Activated CD4-positive, alpha-beta T cell treated with anti-CD3 and anti-CD28 coated beads for 36 hours (primary cell): ENCODE measurements at regions of chr2 and their contacts with region 1.

Region 1: DNA sequence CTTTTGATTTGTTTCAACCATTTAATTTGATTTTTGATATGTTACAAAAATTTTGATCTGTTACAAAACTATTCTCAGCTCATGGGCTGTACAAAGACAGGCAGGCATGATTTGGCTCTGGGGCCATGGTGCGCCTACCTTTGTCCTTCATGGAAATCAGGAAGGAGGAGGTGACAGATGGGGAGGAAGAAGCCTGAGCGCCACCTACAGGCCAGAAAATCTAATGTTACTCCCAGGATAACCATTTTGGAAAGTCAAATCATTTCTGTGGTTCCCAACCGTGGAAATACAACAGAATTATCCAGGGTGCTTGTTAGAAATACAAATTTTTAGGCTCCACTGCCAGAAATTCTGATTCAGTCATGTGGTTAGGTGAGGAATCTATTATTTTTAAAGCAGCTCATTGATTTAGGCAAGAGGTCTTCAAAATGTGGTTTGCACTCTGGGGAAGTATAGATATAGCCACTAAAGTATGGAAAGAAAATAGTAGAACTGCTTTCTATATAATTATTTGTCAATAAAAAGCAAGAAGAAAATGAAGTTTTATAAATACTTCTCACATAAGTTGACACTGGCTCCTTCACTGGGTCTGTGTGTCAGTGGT is 93.9 kb downstream of the EVA1A start:
- DNase-seq: peak; percentile 40
- ATAC-seq: no peak
- H3K4me3 Mint-ChIP-seq: no peak overlapping the region
- H3K27ac Mint-ChIP-seq: no peak overlapping the region
- H3K4me1 Mint-ChIP-seq: no peaks in the 10 kb centered on the region
- H3K27me3 Mint-ChIP-seq: peaks cover 14% of the 10 kb centered on the region

Region 2: DNA sequence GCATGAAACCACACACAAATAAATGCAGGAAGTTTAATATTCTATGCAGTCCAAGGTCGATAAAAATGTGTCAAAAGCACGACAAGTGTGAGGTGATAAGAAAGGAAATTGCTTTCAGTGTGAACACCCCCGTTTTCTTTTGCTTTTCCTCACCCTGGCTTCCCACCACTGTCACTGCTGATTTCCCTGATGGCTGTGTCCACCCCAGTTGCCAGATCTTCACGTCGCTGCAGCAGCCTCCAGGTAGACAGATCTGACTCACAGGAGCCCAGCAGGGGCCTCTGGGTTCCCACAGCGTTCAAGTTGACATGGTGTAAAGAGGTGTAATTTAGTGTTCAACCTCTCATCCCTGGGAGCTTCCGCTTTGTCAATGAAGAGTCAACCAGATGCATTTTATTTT is 139.5 kb before region 1 on chr2:
- CTCF ChIA-PET with region 1: no interaction called
- POLR2A ChIA-PET with region 1: no interaction called
- intact Hi-C with region 1: no loop called
- DNase-seq: no peak
- ATAC-seq: no peak
- H3K4me3 Mint-ChIP-seq: no peak overlapping the region
- H3K27ac Mint-ChIP-seq: no peak overlapping the region
- H3K4me1 Mint-ChIP-seq: no peaks in the 10 kb centered on the region
- H3K27me3 Mint-ChIP-seq: peaks cover 7% of the 10 kb centered on the region

Region 3: GRCh38 chr2:75403991-75404428 is 62.8 kb before region 1 on chr2:
- CTCF ChIA-PET with region 1: no interaction called
- POLR2A ChIA-PET with region 1: no interaction called
- intact Hi-C with region 1: no loop called
- DNase-seq: no peak
- ATAC-seq: peak; percentile 63
- H3K4me3 Mint-ChIP-seq: no peak overlapping the region
- H3K27ac Mint-ChIP-seq: no peak overlapping the region
- H3K4me1 Mint-ChIP-seq: no peaks in the 10 kb centered on the region
- H3K27me3 Mint-ChIP-seq: peaks cover 8% of the 10 kb centered on the region

Region 4: GRCh38 chr2:75608684-75609333 is 142.0 kb after region 1 on chr2:
- CTCF ChIA-PET with region 1: interaction called, 13 read pairs
- POLR2A ChIA-PET with region 1: no interaction called
- intact Hi-C with region 1: loop called (anchors 1 kb)
- DNase-seq: peak; percentile 72
- ATAC-seq: peak; percentile 81
- H3K4me3 Mint-ChIP-seq: no peak overlapping the region
- H3K27ac Mint-ChIP-seq: no peak overlapping the region
- H3K4me1 Mint-ChIP-seq: peaks cover 6% of the 10 kb centered on the region
- H3K27me3 Mint-ChIP-seq: peaks cover 55% of the 10 kb centered on the region

Region 5: GRCh38 chr2:75627895-75628504 is 161.2 kb after region 1 on chr2:
- CTCF ChIA-PET with region 1: interaction called, 7 read pairs
- POLR2A ChIA-PET with region 1: no interaction called
- intact Hi-C with region 1: loop called (anchors 1 to 5 kb)
- DNase-seq: peak; percentile 81
- ATAC-seq: peak; percentile 83
- H3K4me3 Mint-ChIP-seq: no peak overlapping the region
- H3K27ac Mint-ChIP-seq: no peak overlapping the region
- H3K4me1 Mint-ChIP-seq: no peaks in the 10 kb centered on the region
- H3K27me3 Mint-ChIP-seq: peaks cover 22% of the 10 kb centered on the region

Region 6: GRCh38 chr2:75882530-75882929 is 415.7 kb after region 1 on chr2:
- CTCF ChIA-PET with region 1: no interaction called
- POLR2A ChIA-PET with region 1: no interaction called
- intact Hi-C with region 1: no loop called
- DNase-seq: no peak
- ATAC-seq: no peak
- H3K4me3 Mint-ChIP-seq: no peak overlapping the region
- H3K27ac Mint-ChIP-seq: no peak overlapping the region
- H3K4me1 Mint-ChIP-seq: no peaks in the 10 kb centered on the region
- H3K27me3 Mint-ChIP-seq: peaks cover 2% of the 10 kb centered on the region